ENCODE measurements at regions of chr1 and their contacts with region 1.

Region 1: DNA sequence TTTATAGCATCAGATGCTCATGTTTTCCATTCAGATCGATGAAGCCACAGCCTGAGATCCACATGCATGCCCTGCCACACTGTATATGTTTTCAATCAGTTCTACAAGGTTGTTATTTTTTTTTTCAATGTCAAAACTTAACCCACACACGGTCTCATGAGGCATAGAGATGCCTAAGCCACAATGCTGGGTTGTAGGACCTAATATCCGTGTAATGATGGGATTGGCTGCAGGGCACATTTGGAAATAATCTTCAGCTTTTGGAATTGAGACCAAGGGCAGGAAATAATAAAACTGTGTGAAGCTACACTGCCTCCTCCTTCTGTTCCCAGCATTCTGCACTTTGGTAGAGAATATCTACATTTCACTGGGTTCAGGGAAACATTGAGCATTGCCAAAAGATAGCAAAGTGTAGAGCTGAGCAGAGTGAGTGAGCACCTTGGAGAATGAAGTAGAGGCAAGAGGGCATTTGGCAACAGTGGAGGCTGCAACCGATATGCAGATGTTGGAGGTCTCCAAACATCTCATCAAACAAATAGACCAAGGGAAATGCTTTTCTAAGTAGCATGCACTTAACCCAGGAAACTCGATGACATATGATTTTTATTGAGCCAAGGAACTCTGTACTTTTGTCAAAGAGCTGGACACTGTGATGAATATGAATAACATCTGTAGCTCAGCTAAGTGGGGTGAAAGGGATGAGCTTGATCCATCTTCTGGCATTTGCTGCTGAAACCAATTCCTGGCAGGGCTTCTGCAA is 176.7 kb downstream of the LYPLAL1 start:
- DNase-seq: no peak
- ATAC-seq: no peak

Region 2: DNA sequence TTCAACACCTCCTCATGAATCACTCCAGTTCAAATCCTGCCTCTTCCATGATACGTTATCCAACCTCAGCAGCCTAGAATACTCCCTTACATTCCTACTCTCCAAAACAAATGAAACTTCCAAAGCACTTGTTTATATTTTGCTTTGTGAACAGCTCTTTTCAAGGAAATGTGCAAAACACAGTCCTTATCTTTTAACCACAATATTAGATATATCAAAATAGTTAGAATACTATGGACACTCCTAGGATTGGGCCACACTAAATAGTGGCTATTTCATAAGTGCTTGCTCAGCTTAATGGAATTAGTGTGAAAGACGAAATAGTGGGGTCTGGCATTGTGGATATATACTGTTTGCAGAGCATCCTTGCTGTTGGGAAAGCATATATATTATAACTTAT is 89.0 kb after region 1 on chr1:
- intact Hi-C with region 1: loop called (anchors 5 kb)
- DNase-seq: no peak
- ATAC-seq: no peak

Measured in left ventricle myocardium superior (tissue), 1 donor.